H1 (cell line): ENCODE measurements at regions of chr17 and their contacts with region 1.

Region 1: GRCh38 chr17:17041571-17042380 is 481 bp upstream of the MPRIP start:
- DNase-seq: peak; percentile 84 to 97
- H3K4me3 ChIP-seq: peak overlapping the region; percentile 56 to 74 (median 60)
- H3K27ac ChIP-seq: no peak overlapping the region
- H3K4me1 ChIP-seq: peaks cover 3 to 12% (median 8%) of the 10 kb centered on the region in 4 experiments; a peak in 5 of 7 replicates
- H3K27me3 ChIP-seq: peaks cover 0 to 5% (median 3%) of the 10 kb centered on the region in 4 experiments; a peak in 2 of 7 replicates
- CTCF ChIP-seq: no peak
- EP300 ChIP-seq: no peak
- POLR2A ChIP-seq: no peak
- RAD21 ChIP-seq: no peak

Region 2: GRCh38 chr17:17001874-17002520 is 39.8 kb before region 1 on chr17:
- CTCF ChIA-PET with region 1: no interaction called
- POLR2A ChIA-PET with region 1: no interaction called
- DNase-seq: peak; percentile 44 to 94
- H3K4me3 ChIP-seq: no peak overlapping the region
- H3K27ac ChIP-seq: no peak overlapping the region
- H3K4me1 ChIP-seq: peaks cover 0 to 4% (median 0%) of the 10 kb centered on the region in 4 experiments; a peak in 1 of 7 replicates
- H3K27me3 ChIP-seq: no peaks in the 10 kb centered on the region
- CTCF ChIP-seq: peak; percentile 84 to 95 (median 84)
- EP300 ChIP-seq: no peak
- POLR2A ChIP-seq: no peak
- RAD21 ChIP-seq: peak; percentile 97 to 98

Region 3: DNA sequence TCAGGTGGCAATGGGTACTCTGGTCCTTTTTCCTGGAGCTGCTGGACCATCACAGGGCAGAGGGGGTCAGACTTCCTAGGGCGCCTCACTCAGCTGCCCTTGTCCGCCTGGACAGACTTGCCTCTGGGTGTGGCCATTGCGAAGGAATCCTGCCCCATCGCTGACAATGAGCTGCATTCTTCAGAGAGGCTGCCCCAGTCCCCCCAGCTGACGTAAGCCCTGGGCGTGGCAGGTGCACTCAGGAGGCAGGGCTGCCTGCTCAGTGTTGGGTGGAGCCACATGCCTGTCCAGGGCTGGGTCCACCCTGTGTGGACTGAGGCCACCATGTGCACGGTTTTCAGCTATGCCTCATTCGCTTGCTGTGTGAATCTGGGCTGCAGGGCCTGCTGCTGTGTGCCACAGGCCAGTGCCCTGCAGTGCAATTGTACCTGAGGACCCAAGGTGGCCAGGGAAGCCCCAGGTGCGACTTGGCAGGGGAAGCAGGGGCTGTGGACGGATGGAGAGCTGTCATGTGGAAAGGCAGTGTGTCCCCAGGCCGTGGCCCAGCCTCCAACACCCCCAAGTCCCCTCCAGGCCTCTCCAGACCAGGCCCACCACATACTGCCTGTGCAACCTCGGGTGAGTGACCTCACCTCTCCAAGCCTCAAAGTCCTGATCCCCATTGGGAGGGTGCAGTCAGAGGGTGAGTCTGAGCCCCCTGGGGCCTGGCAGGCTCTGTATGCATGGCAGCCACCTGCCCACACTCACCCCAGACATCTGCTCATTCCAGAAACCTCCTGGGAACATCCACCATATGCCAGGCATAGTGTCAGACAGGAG is 13.5 kb before region 1 on chr17:
- CTCF ChIA-PET with region 1: interaction called, 4 read pairs
- POLR2A ChIA-PET with region 1: interaction called, 15 read pairs
- DNase-seq: peak; percentile 56 to 66
- H3K4me3 ChIP-seq: no peak overlapping the region
- H3K27ac ChIP-seq: no peak overlapping the region; the same call in 1 of the 2 replicates
- H3K4me1 ChIP-seq: peaks cover 5 to 24% (median 15%) of the 10 kb centered on the region in 4 experiments
- H3K27me3 ChIP-seq: no peaks in the 10 kb centered on the region
- CTCF ChIP-seq: no peak
- EP300 ChIP-seq: no peak
- POLR2A ChIP-seq: no peak
- RAD21 ChIP-seq: no peak

Region 4: GRCh38 chr17:17055286-17056155 is 13.7 kb after region 1 on chr17:
- CTCF ChIA-PET with region 1: interaction called, 8 read pairs
- POLR2A ChIA-PET with region 1: interaction called, 14 read pairs
- DNase-seq: no peak
- H3K4me3 ChIP-seq: no peak overlapping the region
- H3K27ac ChIP-seq: no peak overlapping the region
- H3K4me1 ChIP-seq: peaks cover 0 to 10% (median 0%) of the 10 kb centered on the region in 4 experiments; a peak in 4 of 7 replicates
- H3K27me3 ChIP-seq: no peaks in the 10 kb centered on the region
- CTCF ChIP-seq: no peak
- EP300 ChIP-seq: no peak
- POLR2A ChIP-seq: no peak
- RAD21 ChIP-seq: no peak

Region 5: GRCh38 chr17:17191346-17191792 is 149.6 kb after region 1 on chr17:
- CTCF ChIA-PET with region 1: no interaction called
- POLR2A ChIA-PET with region 1: no interaction called
- DNase-seq: no peak
- H3K4me3 ChIP-seq: no peak overlapping the region
- H3K27ac ChIP-seq: no peak overlapping the region
- H3K4me1 ChIP-seq: peaks cover 0 to 3% (median under 1%) of the 10 kb centered on the region in 4 experiments; a peak in 3 of 7 replicates
- H3K27me3 ChIP-seq: no peaks in the 10 kb centered on the region
- CTCF ChIP-seq: no peak
- EP300 ChIP-seq: no peak
- POLR2A ChIP-seq: no peak
- RAD21 ChIP-seq: no peak